ENCODE measurements at regions of chr5 and their contacts with region 1.

Region 1: GRCh38 chr5:32092938-32093812 is 80.9 kb downstream of the GOLPH3 start:
- DNase-seq: peak; percentile 77
- H3K4me3 ChIP-seq: no peak overlapping the region
- H3K27ac ChIP-seq: no peak overlapping the region
- H3K4me1 ChIP-seq: peaks cover 11% of the 10 kb centered on the region
- H3K27me3 ChIP-seq: no peaks in the 10 kb centered on the region
- CTCF ChIP-seq: peak; percentile 69 to 76
- POLR2A ChIP-seq: no peak

Region 2: DNA sequence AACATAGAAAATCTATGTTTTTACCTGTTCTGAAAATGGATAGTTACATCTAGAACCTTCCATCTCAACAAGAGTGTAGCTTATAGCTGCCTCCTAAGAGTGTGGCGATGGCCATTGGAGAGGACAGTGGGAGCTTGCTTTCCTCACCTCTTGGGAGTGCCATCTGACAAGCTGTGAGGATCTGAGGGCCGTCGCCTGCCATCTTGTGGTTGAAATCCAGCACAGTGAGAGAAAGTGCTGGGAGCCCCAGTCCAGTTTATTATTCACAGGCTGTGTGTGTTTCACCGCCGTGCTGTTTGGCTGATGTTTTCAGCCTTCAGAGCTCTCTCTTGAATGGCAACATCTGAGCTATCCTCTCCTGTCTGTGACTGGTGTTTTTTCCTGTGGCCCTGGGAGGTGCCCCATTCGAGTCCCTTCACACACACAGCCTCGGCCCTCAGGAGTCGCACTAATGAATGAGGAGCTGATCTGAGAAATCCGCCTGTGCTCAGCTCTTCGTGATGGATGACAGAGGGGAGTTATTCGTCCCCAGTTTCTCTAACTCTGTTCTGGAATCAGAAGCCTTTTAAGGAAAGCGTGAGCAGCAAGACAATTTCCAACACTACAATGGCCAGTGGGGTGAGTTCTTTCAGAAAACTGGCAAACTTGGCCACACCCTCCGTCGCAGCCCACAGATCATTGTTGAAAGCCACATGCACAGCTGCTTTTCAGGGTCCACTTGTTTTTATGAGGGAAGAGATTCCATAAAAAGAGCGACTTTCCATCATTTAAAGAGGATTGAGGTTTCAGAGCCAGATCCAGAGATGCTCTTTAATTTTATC is 283.9 kb before region 1 on chr5:
- CTCF ChIA-PET with region 1: interaction called, 21 read pairs
- POLR2A ChIA-PET with region 1: no interaction called
- dilution Hi-C with region 1: no loop called
- intact Hi-C with region 1: no loop called
- DNase-seq: peak; percentile 48
- H3K4me3 ChIP-seq: no peak overlapping the region
- H3K27ac ChIP-seq: no peak overlapping the region
- H3K4me1 ChIP-seq: no peaks in the 10 kb centered on the region
- H3K27me3 ChIP-seq: no peaks in the 10 kb centered on the region
- CTCF ChIP-seq: peak; percentile 43 to 64
- POLR2A ChIP-seq: no peak

Region 3: GRCh38 chr5:31854181-31855133 is 238.7 kb before region 1 on chr5:
- CTCF ChIA-PET with region 1: interaction called, 13 read pairs
- POLR2A ChIA-PET with region 1: no interaction called
- dilution Hi-C with region 1: no loop called
- intact Hi-C with region 1: no loop called
- DNase-seq: peak; percentile 40
- H3K4me3 ChIP-seq: peak overlapping the region; percentile 10 to 68 (median 36)
- H3K27ac ChIP-seq: peak overlapping the region; percentile 4
- H3K4me1 ChIP-seq: peaks cover 17% of the 10 kb centered on the region
- H3K27me3 ChIP-seq: peaks cover 0 to 2% of the 10 kb centered on the region in 2 experiments
- CTCF ChIP-seq: peak in 1 of 2 donors; percentile 5
- POLR2A ChIP-seq: no peak

Region 4: DNA sequence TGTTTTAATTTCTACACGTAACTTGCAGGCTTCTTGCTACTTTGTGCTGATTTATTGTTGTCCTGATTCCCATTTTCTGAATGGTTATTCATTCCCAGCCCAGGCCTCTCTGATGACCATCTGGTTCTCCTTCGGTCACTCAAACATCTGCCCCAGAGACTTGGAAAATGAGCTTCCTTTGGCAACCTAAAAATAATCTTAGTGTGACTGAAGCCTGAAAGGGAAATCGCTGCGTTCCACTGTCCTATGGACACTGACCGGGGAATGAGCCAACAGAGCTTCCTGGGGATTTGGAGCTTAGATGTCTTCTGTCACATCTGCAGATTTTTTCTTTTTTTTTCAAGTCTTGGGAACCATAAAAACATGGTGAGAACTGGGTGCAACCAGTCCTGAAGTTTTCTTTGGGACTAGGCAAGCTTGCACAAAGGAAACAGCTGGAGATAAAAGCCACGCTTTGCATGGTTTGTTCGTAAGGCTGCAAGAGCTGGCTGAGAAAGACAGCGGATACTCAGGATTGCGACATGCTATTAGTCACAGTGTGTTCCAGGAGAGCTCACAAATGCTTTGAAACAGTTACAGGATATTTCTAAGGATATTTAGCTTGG is 65.4 kb before region 1 on chr5:
- CTCF ChIA-PET with region 1: no interaction called
- POLR2A ChIA-PET with region 1: no interaction called
- dilution Hi-C with region 1: no loop called
- intact Hi-C with region 1: loop called (anchors 5 kb)
- DNase-seq: peak; percentile 35
- H3K4me3 ChIP-seq: peak overlapping the region in 1 of 3 experiments; percentile 19
- H3K27ac ChIP-seq: peak overlapping the region; percentile 34
- H3K4me1 ChIP-seq: peaks cover 38% of the 10 kb centered on the region
- H3K27me3 ChIP-seq: no peaks in the 10 kb centered on the region
- CTCF ChIP-seq: no peak
- POLR2A ChIP-seq: no peak